Astrocyte of the cerebellum (primary cell): ENCODE measurements at regions of chr5 and their contacts with region 1.

Region 1: DNA sequence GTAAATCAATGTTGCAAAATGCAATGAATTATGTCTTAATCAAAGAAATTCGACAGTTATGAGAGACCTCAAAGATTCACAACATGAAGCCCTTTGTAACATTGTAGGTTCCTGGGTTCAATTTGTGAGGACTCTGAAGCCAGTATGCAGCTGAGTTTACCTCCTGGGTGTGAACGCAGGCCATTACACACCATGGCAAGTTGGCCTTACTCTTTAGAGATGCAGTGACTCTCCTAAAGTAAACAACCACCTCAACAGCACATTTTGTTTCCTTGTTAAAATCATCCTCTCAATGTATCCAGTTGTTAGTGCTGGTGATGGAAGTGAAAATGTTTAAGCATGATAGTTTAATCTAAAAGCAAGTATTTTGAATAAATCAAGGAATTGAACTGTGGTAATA is 73.8 kb downstream of the JAKMIP2 start:
- DNase-seq: no peak
- H3K4me3 ChIP-seq: no peak overlapping the region
- CTCF ChIP-seq: no peak

Region 2: DNA sequence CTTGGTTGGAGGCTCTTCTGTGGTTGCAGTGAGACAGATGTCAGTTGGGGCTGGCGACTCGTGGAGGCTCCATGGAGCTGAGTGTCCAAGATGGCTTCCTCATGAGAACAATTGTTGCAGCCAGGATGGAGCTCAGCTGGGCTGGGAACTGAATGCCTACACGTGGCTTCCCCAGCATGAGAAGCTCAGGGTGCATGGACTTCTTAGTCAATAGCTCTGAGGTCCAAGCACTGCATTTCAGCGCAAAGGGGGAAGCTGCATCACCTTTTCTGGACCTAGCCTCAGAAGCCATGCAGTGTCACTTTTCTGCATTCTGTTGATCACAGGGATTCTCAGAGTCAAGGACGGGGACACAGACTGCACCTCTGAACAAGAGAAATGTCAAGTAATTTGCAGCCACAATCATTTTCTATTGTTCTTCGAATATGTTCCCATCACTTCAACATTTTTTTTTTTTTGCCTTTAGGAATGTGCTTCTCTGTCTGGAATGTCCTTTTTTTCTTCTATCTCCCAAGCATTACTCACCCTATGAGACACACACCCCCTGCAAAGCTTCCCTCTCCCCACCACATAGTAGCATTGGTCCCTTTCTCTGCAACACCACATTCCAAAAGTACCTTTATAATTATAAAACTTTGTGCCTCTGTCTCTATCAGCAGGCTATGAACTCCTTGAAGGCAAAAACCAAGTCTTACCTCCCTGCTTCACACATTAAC is 531.4 kb before region 1 on chr5:
- in situ Hi-C with region 1: no loop called
- DNase-seq: peak; percentile 45
- H3K4me3 ChIP-seq: no peak overlapping the region
- CTCF ChIP-seq: no peak

Region 3: GRCh38 chr5:147617191-147617606 is 91.5 kb before region 1 on chr5:
- in situ Hi-C with region 1: no loop called
- DNase-seq: no peak
- H3K4me3 ChIP-seq: no peak overlapping the region
- CTCF ChIP-seq: no peak

Region 4: GRCh38 chr5:147628058-147628895 is 80.4 kb before region 1 on chr5:
- in situ Hi-C with region 1: no loop called
- DNase-seq: peak; percentile 75
- H3K4me3 ChIP-seq: no peak overlapping the region
- CTCF ChIP-seq: peak; percentile 83

Region 5: DNA sequence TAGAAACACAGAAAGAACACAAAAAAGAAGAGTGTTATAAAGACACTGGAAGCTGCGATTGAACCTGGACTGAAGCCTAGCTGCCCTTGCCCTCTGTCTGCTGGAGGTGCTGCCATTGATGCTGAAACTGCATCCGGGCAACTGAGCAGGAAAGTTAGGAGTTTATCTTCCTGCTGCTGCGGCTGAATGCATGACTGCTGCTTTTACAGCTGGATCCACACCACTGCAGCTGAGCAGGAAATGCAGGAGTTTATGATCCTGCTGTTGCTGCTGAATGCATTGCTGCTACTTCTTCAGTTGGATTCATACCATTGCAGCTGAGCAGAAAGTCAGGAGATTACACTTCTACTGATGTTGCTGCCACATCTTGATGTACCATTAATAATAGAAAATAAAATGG is 95.6 kb after region 1 on chr5:
- in situ Hi-C with region 1: loop called (anchors 5 kb)
- DNase-seq: no peak
- H3K4me3 ChIP-seq: no peak overlapping the region
- CTCF ChIP-seq: no peak

Region 6: DNA sequence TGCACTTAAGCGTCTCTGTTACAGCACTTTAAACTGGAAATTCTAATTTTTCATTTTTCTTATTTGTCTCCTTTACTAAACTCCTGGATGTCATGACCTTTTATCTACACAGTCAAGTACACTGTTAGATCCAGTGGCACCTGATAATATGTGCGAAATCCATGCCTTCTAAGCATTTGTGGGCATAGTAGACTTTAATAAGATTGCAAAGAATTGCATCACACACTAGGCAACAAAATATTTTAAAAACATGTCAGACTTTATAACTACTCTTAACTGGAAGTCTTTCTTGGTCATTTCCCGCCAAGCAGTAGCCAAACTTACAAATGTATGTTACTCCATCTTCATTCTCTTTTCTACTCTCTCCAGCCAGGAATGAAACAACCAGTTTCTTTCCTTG is 127.7 kb after region 1 on chr5:
- in situ Hi-C with region 1: no loop called
- DNase-seq: no peak
- H3K4me3 ChIP-seq: no peak overlapping the region
- CTCF ChIP-seq: no peak